ENCODE measurements at regions of chr6 and their contacts with region 1.

Region 1: GRCh38 chr6:155154158-155154830 is 109.5 kb upstream of the CLDN20 start:
- DNase-seq: peak; percentile 68
- H3K4me3 ChIP-seq: no peak overlapping the region
- H3K27ac ChIP-seq: peak overlapping the region; percentile 50
- H3K4me1 ChIP-seq: peaks cover 28% of the 10 kb centered on the region
- H3K27me3 ChIP-seq: no peaks in the 10 kb centered on the region
- CTCF ChIP-seq: no peak
- POLR2A ChIP-seq: no peak

Region 2: DNA sequence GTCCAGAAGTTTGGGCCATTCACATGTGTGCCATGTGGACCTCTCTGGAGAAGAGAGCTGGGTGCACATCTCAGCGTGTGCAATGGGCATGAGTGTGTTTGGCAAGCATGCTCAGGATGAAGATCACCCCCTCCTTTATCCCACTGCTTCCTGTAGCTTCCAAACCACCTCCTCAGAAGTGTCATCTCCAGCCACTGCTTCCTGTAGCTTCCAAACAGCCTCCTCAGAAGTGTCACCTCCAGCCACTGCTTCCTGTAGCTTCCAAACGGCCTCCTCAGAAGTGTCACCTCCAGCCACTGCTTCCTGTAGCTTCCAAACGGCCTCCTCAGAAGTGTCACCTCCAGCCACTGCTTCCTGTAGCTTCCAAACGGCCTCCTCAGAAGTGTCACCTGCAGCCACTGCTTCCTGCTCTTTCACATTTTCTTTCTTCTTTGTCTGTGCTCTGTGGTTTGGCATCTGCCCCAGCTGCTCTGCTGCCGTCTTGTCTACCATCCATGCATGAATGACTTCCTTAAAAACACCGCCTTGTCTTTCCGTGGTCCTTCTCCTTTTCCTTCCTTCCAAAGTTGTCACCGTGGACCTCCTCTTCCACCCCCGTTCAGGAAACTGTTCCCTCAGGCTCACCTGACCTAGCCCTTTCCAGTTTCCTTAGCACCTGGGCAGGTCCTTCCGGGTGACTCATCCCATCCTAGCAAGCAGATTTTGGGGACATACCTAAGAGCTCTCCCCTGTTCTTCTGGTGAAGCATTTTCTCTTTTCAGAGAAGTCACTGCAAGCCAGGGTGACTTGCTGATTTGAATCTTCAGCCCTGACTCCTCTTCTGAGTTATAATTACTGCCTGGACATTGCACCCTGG is 202.7 kb before region 1 on chr6:
- CTCF ChIA-PET with region 1: no interaction called
- POLR2A ChIA-PET with region 1: no interaction called
- dilution Hi-C with region 1: no loop called
- intact Hi-C with region 1: no loop called
- DNase-seq: no peak
- H3K4me3 ChIP-seq: no peak overlapping the region
- H3K27ac ChIP-seq: no peak overlapping the region
- H3K4me1 ChIP-seq: no peaks in the 10 kb centered on the region
- H3K27me3 ChIP-seq: no peaks in the 10 kb centered on the region
- CTCF ChIP-seq: no peak
- POLR2A ChIP-seq: no peak

Region 3: GRCh38 chr6:155062866-155063341 is 91.4 kb before region 1 on chr6:
- CTCF ChIA-PET with region 1: no interaction called
- POLR2A ChIA-PET with region 1: no interaction called
- dilution Hi-C with region 1: no loop called
- intact Hi-C with region 1: no loop called
- DNase-seq: no peak
- H3K4me3 ChIP-seq: no peak overlapping the region
- H3K27ac ChIP-seq: no peak overlapping the region
- H3K4me1 ChIP-seq: no peaks in the 10 kb centered on the region
- H3K27me3 ChIP-seq: no peaks in the 10 kb centered on the region
- CTCF ChIP-seq: no peak
- POLR2A ChIP-seq: no peak

Region 4: GRCh38 chr6:155126727-155127439 is 27.4 kb before region 1 on chr6:
- CTCF ChIA-PET with region 1: no interaction called
- POLR2A ChIA-PET with region 1: no interaction called
- dilution Hi-C with region 1: no loop called
- intact Hi-C with region 1: loop called (anchors 2 kb)
- DNase-seq: peak; percentile 78
- H3K4me3 ChIP-seq: no peak overlapping the region
- H3K27ac ChIP-seq: peak overlapping the region; percentile 74
- H3K4me1 ChIP-seq: peaks cover 10% of the 10 kb centered on the region
- H3K27me3 ChIP-seq: no peaks in the 10 kb centered on the region
- CTCF ChIP-seq: no peak
- POLR2A ChIP-seq: no peak

Region 5: GRCh38 chr6:155436981-155437749 is 282.9 kb after region 1 on chr6:
- CTCF ChIA-PET with region 1: no interaction called
- POLR2A ChIA-PET with region 1: no interaction called
- dilution Hi-C with region 1: no loop called
- intact Hi-C with region 1: no loop called
- DNase-seq: peak; percentile 65
- H3K4me3 ChIP-seq: no peak overlapping the region
- H3K27ac ChIP-seq: no peak overlapping the region
- H3K4me1 ChIP-seq: no peaks in the 10 kb centered on the region
- H3K27me3 ChIP-seq: no peaks in the 10 kb centered on the region
- CTCF ChIP-seq: no peak
- POLR2A ChIP-seq: no peak